ENCODE measurements at regions of chr7 and their contacts with region 1.

Region 1: DNA sequence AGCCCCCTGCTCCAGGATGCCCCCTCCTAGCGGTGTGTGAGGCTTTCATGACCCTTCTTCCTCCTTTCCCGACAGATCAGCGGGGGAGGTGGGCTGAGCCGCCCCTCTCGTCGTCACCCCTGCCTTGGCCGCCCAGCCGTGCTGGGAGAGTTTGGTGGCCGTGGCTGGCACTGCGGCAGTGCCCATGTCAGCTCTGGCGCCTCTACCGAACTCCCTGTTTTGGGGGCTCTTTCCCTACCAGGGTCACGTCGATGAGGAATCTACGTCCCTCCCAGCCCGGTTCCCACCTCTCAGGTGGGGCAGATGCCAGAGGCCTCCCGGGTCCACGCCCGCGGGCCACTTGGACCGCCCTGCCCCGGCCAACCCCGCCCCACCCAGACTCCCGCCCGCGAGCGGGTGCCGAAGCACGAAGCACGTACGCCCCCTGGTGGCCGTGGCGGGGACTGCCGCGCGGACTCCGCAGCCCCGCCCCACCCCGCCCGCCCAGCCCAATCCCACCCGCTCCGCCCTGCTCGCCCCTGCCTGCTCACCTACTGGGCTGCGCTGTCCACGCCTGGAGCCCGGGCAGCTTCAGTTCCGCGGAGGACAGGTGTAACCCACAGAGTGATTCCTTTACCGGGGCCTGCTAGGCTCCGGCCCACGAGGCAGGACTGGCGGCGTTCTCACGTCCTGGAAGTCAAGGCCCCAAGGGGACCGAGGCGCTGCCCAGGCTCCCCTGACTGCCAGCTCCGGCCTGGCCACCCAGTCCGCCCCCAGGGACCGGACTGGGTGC is 127.1 kb downstream of the UBE2H start:
- DNase-seq: peak; percentile 83
- H3K4me3 Mint-ChIP-seq: peak overlapping the region; percentile 89
- H3K27ac Mint-ChIP-seq: peak overlapping the region; percentile 67
- H3K4me1 Mint-ChIP-seq: peaks cover 14% of the 10 kb centered on the region
- H3K27me3 Mint-ChIP-seq: no peaks in the 10 kb centered on the region

Region 2: DNA sequence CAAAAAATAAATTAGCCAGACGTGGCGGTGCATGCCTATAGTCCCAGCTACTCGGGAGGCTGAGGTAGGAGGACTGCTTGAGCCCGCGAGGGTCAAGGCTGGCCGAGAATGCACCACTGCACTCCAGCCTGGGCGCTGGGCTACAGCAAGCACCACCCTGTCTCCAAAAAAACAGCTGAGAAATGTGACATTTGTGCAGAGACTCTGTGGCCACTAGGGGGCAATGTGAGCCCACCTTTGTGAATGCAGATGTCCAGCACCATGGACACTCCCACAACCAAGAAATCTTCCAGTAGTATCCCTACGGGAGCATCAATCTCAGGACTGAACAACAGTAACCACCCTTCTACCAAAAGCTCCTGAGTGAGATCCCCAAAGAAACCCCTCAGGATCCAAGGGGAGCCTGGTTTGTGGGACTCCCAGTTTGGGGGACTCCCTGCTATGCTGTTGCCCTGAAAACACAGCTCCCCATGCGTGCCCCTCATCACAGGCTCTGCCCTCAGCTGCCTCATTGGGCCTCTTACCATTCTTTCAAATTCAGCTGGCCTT is 607.1 kb before region 1 on chr7:
- intact Hi-C with region 1: loop called (anchors 1 kb)
- DNase-seq: peak; percentile 67
- H3K4me3 Mint-ChIP-seq: no peak overlapping the region
- H3K27ac Mint-ChIP-seq: no peak overlapping the region
- H3K4me1 Mint-ChIP-seq: peaks cover 11% of the 10 kb centered on the region
- H3K27me3 Mint-ChIP-seq: peaks cover 9% of the 10 kb centered on the region

Region 3: GRCh38 chr7:129502376-129502776 is 323.3 kb before region 1 on chr7 and contains the start of gene SMKR1:
- intact Hi-C with region 1: loop called (anchors 2 kb)
- DNase-seq: peak; percentile 90
- H3K4me3 Mint-ChIP-seq: peak within 1 kb of the TSS; percentile 82
- H3K27ac Mint-ChIP-seq: peak within 1 kb of the TSS; percentile 86
- H3K4me1 Mint-ChIP-seq: peaks cover 19% of the 10 kb centered on the region
- H3K27me3 Mint-ChIP-seq: peaks cover 16% of the 10 kb centered on the region
- total RNA-seq, gene SMKR1: 4.8 and 5.7 TPM in 2 replicates

Region 4: DNA sequence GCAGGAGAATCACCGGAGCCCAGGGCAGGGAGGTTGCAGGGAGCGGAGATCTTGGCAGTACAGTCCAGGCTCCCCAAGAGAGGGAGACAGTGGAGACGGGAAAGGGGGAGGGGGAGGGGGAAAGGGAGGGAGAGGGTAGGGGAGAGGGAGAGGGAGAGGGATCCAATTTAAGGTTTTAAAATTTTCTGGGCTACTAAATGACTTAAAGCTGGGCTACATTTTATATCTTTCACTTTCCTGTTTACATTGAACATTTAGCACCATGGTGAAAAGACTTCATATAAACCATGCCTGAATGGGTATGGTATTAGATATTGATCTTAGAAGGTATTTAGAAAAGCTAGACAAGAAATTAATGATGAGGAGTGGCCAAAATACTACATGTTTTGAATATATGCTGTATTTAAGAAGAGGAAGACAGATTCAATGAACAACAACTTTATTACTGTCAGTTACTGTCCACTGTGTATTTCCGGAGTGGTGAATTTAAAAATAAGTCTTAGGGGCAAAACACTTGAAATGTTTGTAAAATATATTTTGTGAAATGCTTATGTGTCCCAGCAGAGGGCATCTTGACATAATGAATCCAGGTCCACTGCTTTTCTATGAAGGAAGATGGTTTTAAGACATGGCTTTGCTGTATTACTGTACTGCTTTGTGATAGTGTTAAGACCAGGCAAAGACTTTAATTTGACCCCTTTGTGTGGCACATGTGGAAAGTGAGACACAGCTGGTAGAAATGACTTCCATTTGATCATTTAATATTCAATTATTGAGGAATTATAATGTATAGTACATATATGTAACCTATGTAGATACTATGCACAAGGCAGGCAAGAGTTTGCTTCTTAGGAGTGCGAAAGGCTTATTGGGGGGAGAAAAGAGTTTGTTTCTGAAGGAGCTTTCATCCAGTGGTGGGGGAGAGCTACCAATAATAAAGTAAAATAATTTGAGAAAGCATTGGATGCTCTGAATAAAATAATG is 161.4 kb before region 1 on chr7:
- intact Hi-C with region 1: loop called (anchors 1 kb)
- DNase-seq: no peak
- H3K4me3 Mint-ChIP-seq: no peak overlapping the region
- H3K27ac Mint-ChIP-seq: no peak overlapping the region
- H3K4me1 Mint-ChIP-seq: peaks cover 4% of the 10 kb centered on the region
- H3K27me3 Mint-ChIP-seq: no peaks in the 10 kb centered on the region

Region 5: GRCh38 chr7:129707910-129708499 is 117.7 kb before region 1 on chr7:
- intact Hi-C with region 1: no loop called
- DNase-seq: no peak
- H3K4me3 Mint-ChIP-seq: no peak overlapping the region
- H3K27ac Mint-ChIP-seq: no peak overlapping the region
- H3K4me1 Mint-ChIP-seq: peaks cover 10% of the 10 kb centered on the region
- H3K27me3 Mint-ChIP-seq: no peaks in the 10 kb centered on the region

Region 6: DNA sequence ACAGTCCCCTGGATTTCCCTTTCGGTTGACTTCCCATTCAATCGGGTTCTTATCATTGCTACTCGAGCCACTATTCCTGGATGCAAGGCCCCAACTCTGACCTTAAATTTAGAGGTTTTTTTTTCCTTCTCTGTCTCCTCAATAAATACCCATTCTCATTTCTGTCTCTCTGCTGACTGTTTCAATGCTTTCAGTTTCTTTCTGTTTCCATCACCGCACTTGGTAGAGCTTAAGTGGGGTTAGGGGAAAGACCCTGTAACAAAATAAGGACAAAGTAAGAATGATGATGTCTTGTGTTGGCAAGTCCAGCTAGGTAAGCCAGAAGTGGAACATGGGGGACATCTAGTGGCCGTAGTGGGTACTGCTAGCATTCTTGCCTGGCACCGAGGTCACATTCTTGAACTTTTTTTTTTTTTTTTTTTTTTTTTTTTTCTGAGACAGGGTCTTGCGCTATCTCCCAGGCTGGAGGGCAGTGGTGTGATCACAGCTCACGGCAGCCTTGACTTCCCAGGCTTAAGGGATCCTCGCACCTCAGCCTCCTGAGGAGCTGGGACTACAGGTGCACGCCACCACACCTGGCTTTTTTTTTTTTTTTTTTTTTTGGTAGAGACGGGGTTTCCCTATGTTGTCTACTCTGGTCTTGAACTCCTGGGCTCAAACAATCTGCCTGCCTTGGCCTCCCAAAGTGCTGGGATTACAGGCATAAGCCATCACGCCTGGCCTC is 185.2 kb after region 1 on chr7:
- intact Hi-C with region 1: loop called (anchors 1 kb)
- DNase-seq: peak; percentile 76
- H3K4me3 Mint-ChIP-seq: no peak overlapping the region
- H3K27ac Mint-ChIP-seq: peak overlapping the region; percentile 75
- H3K4me1 Mint-ChIP-seq: peaks cover 5% of the 10 kb centered on the region
- H3K27me3 Mint-ChIP-seq: no peaks in the 10 kb centered on the region